Activated B cell treated with CpG ODN at 0.5 μM for 24 hours (primary cell): ENCODE measurements at regions of chr6 and their contacts with region 1.

Region 1: DNA sequence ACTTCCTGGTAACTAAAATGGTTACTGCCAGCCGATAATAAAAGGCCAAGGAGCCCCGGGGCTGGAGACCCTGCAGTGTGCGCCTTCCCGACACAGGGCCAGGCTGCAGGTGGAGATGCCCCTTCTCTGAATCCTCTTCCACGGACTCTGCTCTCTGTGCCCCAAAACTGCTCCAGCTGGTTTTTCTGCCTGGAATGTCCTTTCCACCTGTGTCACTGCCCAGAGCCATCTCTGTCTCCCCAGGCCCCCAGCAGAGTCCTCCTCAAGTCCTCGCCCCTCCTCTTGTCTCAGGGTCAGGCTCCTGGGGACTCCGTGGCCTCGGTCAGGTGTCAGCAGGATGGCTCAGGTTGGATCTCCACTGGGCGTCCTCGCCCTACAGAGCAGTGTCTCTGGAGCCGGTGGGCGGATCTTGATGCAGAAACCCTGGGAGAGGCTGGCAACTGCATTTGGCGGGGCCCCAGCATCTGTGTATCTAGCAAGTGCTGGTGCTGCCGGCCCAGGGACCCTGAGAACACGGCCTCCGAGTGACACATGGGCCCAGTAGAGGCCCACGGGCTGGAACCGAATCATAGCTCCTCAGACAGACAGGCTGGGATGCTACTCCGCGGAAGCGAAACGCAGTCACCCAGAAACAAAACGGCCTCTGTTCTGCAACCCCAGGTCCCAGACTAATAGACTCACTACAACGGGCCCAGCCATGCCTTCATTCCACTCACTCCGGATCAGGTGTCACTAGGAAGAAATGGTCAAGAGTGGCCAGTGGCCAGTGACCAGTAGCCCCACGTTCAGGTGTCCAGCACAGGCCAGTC is 12.4 kb upstream of the FRMD1 start:
- DNase-seq: no peak
- ATAC-seq: no peak
- H3K4me3 Mint-ChIP-seq: no peak overlapping the region
- H3K27ac Mint-ChIP-seq: no peak overlapping the region
- H3K4me1 Mint-ChIP-seq: no peaks in the 10 kb centered on the region
- H3K27me3 Mint-ChIP-seq: peaks cover 1% of the 10 kb centered on the region
- CTCF ChIP-seq: no peak

Region 2: DNA sequence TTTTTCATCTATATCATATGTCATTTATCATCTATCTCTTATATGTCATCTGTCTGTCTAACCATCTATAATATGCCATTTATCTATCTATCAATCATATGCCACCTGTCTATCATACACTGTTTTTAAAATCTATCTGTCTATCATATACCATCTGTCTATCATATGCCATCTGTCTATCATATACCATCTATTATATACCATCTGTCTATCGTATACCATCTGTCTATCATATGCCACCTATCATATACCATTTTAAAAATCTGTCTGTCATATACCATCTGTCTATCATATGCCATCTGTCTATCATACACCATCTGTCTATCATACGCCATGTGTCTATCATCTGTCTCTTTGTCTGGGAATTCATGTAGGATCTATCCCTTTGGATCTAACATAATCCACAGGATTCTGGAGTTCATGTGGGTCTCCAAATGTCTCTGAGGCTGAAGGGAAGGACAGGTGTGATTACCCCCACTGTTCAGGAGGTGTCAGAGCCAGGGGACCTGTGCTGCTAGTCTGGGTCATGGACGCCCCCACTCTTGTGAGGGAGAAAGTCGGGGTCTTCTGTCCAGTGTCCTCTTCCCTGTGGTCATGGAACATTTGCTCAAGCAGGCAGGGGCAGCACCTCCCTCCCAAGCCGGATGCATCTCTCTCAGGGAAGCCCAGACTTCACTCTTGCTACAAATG is 24.5 kb after region 1 on chr6:
- CTCF ChIA-PET with region 1: no interaction called
- POLR2A ChIA-PET with region 1: no interaction called
- intact Hi-C with region 1: loop called (anchors 1 kb)
- DNase-seq: no peak
- ATAC-seq: no peak
- H3K4me3 Mint-ChIP-seq: no peak overlapping the region
- H3K27ac Mint-ChIP-seq: no peak overlapping the region
- H3K4me1 Mint-ChIP-seq: no peaks in the 10 kb centered on the region
- H3K27me3 Mint-ChIP-seq: no peaks in the 10 kb centered on the region
- CTCF ChIP-seq: no peak

Region 3: DNA sequence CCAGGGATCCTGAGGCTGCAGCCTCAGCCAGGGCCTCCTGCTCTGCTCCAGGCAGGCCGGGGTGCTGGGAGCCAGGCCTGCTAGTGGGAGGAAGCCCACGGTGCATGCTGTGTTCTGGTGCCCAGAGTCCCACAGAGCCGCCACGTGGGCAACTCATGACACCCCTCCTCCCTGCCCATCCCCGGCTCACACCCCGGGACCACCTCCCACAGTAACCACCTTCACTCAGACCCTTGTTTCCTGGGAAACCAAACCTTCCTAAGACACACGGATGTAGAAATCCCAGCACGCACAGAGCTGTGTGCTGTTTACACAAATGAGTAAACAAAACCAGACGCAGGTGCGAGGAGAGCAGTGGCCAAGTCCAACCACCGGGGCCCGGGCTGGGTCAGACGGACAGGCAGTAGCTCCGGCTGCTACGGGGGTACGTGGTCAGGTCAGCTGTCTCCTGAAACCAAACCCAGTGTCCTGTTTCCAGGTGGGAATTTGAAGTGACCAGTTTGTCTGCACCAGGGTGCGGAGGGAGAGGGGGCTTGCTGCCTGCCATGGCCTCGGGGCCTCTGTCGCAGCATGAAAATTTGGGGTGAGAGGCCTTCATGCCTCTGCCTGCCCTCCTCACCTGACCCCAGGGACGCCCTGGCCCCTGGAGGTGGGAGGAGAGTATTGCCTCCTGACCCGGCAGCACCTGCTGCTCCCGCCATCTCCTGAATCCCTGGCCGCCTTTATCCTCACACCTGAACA is 297.4 kb after region 1 on chr6:
- CTCF ChIA-PET with region 1: no interaction called
- POLR2A ChIA-PET with region 1: no interaction called
- intact Hi-C with region 1: no loop called
- DNase-seq: no peak
- ATAC-seq: no peak
- H3K4me3 Mint-ChIP-seq: no peak overlapping the region
- H3K27ac Mint-ChIP-seq: no peak overlapping the region
- H3K4me1 Mint-ChIP-seq: no peaks in the 10 kb centered on the region
- H3K27me3 Mint-ChIP-seq: no peaks in the 10 kb centered on the region
- CTCF ChIP-seq: no peak